Activated naive CD4-positive, alpha-beta T cell treated with anti-CD3 and anti-CD28 coated beads, Interleukin-2, amount 10 ng/mL, durations not matched to agents 7 days and 5 days (primary cell): ENCODE measurements at regions of chr17 and their contacts with region 1.

Region 1: DNA sequence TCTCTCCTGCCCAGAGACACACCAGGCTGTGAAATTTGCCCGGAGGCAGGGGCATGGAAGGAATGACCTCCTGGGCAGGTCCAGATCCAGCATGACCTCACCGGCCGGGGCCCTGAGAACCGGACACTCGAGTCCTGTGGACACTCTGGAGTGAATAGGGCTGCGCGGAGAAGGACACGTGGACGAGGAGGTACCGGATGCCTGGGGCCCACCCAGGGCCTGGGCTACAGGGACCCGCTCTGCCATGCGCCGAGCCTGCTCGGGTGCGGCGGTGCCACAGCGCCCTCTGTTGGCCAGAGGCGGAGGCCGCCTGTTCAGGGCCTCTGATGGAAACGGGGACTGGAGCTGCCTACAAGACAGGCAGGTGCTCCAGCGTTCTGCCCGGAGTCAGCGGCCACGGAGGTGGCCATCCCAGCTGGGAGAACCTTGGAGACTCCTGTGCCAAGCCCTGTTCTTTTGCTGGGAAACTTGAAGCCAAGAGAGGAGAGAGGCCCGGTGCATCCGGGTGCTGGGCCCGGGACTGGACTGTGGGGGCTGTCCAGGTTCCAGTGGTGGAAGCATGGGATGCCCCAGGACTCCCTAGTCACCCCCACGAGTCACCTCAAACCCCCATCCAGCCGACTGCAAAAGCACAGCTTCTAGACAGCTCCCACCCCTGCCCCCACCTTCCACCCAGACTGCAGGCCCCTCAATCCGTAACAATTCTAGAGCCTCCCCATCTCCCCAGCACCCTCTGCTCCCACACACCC is 19.3 kb upstream of the NXPH3 start:
- DNase-seq: peak; percentile 87
- H3K4me3 Mint-ChIP-seq: no peak overlapping the region
- H3K27ac Mint-ChIP-seq: no peak overlapping the region
- H3K4me1 Mint-ChIP-seq: no peaks in the 10 kb centered on the region
- H3K27me3 Mint-ChIP-seq: peaks cover 17% of the 10 kb centered on the region

Region 2: DNA sequence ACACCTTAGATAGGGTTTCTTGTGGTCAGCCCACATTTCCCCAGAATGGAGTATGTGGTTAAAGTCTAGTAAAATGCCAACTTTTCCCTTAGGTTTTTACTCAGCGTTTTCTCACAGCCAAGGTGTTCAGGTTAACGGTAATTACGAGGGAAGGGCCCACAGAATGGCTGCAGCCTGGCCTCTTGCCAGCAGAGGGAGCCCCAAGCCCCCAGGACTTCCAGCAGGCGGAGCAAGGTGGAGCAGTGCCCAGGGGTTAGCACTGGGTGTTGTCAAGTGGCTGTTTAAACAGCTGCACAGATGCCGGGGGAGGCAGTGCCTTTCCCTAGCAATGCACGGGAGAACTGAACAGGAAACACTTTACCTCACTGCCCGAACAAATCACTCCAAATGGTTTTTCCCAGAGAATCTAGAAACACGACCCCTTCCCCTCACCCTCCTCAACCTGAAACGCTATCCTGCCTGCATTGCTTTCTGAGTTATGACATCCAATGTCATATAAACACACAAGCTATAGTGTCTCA is 148.4 kb before region 1 on chr17:
- CTCF ChIA-PET with region 1: interaction called, 117 read pairs
- DNase-seq: peak; percentile 89
- H3K4me3 Mint-ChIP-seq: no peak overlapping the region
- H3K27ac Mint-ChIP-seq: no peak overlapping the region
- H3K4me1 Mint-ChIP-seq: peaks cover 44% of the 10 kb centered on the region
- H3K27me3 Mint-ChIP-seq: no peaks in the 10 kb centered on the region

Region 3: DNA sequence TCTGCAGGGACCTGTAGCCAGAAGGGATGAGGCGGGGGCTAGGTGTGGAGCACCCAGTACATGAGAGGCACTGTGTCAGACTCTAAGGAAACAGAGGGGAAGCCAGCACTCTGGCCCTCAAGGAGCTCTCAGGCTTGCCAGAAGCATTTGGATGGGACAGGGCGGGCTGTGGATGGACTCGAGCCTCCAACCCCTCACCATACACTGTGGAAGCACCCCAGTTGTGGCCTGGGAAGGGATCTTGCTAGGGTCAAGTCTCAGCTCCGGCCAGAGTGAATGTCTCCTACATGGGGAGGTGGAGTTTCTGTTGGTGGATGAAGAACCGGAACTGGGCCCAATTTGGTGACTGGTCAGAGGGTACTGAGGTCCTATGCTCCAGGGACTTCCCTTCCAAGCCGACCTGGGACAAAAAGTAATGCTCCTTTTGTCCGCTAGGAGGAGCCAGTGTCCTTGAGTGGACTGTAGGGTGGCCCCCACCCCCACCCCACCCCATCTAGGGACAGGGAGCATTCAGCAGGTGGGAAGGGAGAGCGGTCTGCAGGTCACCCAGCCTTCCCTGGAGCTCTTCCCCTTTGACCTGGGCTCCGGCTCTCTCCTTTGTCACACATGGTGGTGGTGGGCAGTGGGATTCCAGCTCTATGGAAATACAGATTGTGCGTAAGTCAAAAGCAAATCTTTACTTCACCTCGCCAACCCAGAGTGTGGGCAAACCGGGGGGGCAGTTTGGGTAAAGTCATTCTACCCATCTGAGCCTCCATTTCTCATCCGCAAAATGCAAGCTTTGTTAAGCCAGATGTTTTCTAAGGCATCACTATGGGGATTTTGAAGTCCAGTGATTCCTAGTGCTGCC is 121.4 kb before region 1 on chr17:
- CTCF ChIA-PET with region 1: interaction called, 74 read pairs
- DNase-seq: peak; percentile 62
- H3K4me3 Mint-ChIP-seq: no peak overlapping the region
- H3K27ac Mint-ChIP-seq: no peak overlapping the region
- H3K4me1 Mint-ChIP-seq: no peaks in the 10 kb centered on the region
- H3K27me3 Mint-ChIP-seq: peaks cover 66% of the 10 kb centered on the region

Region 4: DNA sequence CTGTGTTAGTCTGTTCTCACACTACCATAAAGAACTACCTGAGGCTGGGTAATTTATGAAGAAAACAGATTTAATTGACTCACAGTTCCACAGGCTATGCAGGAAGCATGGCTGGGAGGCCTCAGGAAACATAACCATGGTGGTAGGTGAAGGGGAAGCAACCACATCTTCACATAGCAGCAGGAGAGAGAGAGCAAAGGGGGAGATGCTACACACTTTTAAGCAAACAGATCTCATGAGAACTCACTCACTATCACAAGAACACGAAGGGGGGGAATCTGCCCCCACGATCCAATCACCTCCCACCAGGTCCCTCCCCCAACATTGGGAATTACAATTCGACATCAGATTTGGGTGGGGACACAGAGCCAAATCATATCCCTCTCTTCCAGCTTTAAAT is 12.5 kb before region 1 on chr17:
- CTCF ChIA-PET with region 1: interaction called, 11 read pairs
- DNase-seq: no peak
- H3K4me3 Mint-ChIP-seq: no peak overlapping the region
- H3K27ac Mint-ChIP-seq: no peak overlapping the region
- H3K4me1 Mint-ChIP-seq: no peaks in the 10 kb centered on the region
- H3K27me3 Mint-ChIP-seq: peaks cover 25% of the 10 kb centered on the region

Region 5: DNA sequence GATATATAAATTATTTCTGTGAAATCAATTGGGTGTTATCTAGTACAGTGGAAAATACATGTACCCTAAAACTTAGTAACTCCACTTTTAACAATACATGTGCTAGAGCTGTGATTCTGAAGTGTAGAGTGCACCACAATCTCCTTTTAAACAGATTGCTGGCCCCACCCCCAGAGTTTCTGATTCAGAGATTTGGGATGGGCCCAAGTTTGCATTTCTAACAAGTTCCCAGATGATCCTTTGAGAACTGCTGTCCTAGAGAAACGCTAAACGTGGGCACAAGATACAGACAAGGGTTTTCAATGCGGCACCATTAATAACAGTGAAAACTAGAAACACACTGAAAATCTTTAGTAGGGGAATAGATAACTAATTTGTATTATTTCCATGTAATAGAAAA is 68.5 kb after region 1 on chr17:
- CTCF ChIA-PET with region 1: no interaction called
- DNase-seq: no peak
- H3K4me3 Mint-ChIP-seq: no peak overlapping the region
- H3K27ac Mint-ChIP-seq: no peak overlapping the region
- H3K4me1 Mint-ChIP-seq: peaks cover 14% of the 10 kb centered on the region
- H3K27me3 Mint-ChIP-seq: no peaks in the 10 kb centered on the region

Region 6: GRCh38 chr17:49670641-49671040 is 114.2 kb after region 1 on chr17:
- CTCF ChIA-PET with region 1: no interaction called
- DNase-seq: no peak
- H3K4me3 Mint-ChIP-seq: no peak overlapping the region
- H3K27ac Mint-ChIP-seq: no peak overlapping the region
- H3K4me1 Mint-ChIP-seq: peaks cover 30% of the 10 kb centered on the region
- H3K27me3 Mint-ChIP-seq: no peaks in the 10 kb centered on the region

Region 7: DNA sequence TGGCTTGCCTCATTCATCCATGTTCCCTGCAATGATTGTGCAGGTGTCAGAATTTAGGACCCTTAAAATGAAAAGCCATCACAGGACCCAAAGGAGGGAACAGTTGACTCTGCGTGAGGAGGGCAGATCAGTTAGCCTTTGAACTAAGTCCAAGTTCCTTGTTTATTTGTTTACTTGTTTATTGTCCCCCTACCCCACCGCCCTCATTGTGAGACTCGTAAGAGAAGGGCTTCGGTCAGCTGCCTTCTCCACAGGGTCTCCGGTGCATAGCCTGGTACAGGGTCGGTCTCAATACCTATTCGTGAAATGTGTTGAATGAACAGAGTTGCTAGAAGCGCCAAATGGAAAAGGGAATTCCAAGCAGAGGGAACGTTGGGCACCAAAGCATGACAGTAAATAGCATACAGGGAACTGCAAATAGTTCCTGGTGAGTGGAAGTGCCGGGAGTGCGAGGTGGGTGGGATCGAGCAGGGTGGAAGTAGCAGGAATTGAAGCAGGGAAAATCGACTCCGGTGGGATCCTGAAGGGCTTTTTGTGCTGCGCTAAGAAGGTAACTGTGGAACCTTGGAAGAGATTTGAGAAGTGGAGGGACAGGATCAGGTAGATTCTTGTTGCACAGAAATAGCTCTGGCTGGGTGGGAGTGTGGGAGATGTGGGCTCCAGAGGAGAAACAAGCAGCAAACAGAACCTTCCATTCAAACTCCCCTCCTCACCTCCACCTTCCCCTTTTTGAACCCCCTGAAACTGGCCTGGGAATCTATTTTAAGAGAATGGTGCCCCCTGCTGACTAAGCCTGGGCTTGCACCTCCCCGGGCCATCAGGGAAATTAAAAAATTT is 138.7 kb after region 1 on chr17:
- CTCF ChIA-PET with region 1: interaction called, 56 read pairs
- DNase-seq: peak; percentile 80
- H3K4me3 Mint-ChIP-seq: no peak overlapping the region
- H3K27ac Mint-ChIP-seq: peak overlapping the region; percentile 33
- H3K4me1 Mint-ChIP-seq: peaks cover 39% of the 10 kb centered on the region
- H3K27me3 Mint-ChIP-seq: peaks cover 5% of the 10 kb centered on the region